Activated CD8-positive, alpha-beta T cell treated with anti-CD3 and anti-CD28 coated beads, Interleukin-2, amount 10 ng/mL, durations not matched to agents 7 days and 5 days (primary cell): ENCODE measurements at regions of chr17 and their contacts with region 1.

Region 1: DNA sequence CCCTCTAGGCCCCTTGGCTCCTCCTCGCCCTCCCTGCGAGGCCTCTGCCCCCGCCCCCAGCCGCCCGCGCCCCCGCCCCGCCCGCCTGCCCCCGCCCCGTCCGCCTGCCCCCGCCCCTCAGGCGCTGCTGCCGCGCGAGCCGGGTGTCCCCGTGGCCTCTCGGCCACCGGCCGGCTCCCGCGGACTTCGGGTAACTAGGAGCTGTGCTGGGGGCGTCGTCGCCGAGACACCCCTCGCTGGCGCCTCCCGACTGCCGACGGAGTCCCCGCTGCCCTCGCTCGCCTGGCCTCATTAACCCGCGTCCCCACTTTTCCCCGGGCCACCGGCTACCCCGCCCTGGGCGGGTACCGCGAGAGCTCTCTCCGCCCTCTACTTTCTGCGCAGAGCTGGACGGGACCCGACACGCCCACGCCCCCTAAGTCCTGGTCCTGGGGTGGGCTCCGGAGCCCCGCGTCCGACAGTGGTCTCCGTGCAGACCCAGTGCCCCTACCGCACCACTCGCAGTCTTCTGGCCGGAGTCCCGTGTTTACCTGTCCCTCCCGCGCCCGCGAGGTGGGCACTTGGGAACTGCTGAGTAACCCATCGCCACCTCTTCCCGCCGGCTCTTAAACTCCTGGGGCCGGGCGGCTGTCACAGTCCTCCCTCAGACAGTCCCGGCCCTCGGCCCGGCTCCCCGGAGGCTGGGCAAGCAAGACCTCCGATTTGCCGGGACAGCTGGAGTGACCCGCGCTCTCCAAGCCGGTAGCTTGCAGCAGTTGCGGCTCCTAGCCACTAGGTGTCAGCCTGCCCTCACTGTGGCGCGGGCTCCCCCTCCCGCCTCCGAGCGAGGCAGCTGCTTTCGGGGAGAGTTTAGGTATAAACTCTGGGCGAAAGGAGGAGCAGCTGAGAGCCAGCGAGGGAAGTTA is at the start of gene TLCD1:
- DNase-seq: peak; percentile 95
- ATAC-seq: peak; percentile 64
- H3K4me3 Mint-ChIP-seq: peak within 1 kb of the TSS; percentile 94
- H3K27ac Mint-ChIP-seq: peak within 1 kb of the TSS; percentile 99
- H3K4me1 Mint-ChIP-seq: peaks cover 64% of the 10 kb centered on the region
- H3K27me3 Mint-ChIP-seq: no peaks in the 10 kb centered on the region
- total RNA-seq, gene TLCD1: 2.8 to 3.0 TPM

Region 2: DNA sequence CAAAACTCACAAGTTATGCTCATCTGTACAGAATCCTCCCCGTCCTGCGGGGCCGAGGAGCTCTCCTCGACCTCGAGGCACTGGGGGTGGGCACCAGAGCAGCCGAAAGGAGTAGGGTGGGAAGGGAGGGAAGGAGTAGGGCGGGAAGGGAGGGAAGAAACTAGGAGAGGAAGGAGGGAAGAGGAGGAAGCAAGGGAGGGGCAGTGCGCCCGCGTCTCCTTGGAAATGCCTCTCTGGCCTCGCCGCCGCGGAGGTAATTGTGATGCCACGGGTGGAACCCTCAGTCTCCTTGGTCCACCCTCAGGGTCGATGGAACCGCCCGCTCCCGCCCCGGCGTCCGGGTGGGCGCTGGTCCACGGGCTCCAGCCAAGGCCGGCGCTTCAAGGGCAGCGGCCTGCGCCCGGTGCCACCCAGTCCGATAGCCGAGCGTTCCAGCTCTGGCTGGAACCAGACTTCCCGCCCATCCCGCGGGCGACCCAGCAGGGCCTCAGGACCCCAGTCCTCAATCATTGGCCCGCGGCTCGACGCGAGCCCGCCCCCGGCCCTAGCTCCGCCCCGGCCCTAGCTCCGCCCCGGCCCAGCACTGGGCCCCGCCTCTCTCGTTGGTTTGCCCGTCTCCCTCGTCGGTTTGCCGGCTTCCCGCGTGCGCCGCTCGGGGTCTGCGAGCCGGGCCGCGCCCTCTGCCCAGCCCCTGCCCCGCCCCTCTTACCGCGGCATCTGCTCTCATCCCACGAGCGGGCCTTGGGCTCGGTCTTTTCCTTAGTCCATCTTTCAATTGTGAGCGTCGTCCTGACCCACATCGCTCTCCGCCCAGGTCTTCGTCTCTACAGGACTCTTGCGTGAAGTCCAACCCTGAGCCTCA is 15.4 kb before region 1 on chr17:
- CTCF ChIA-PET with region 1: interaction called, 26 read pairs
- POLR2A ChIA-PET with region 1: interaction called, 8 read pairs
- DNase-seq: peak; percentile 91
- ATAC-seq: peak; percentile 91
- H3K4me3 Mint-ChIP-seq: peak overlapping the region; percentile 86
- H3K27ac Mint-ChIP-seq: peak overlapping the region; percentile 98
- H3K4me1 Mint-ChIP-seq: peaks cover 20% of the 10 kb centered on the region
- H3K27me3 Mint-ChIP-seq: peaks cover 9% of the 10 kb centered on the region

Region 3: DNA sequence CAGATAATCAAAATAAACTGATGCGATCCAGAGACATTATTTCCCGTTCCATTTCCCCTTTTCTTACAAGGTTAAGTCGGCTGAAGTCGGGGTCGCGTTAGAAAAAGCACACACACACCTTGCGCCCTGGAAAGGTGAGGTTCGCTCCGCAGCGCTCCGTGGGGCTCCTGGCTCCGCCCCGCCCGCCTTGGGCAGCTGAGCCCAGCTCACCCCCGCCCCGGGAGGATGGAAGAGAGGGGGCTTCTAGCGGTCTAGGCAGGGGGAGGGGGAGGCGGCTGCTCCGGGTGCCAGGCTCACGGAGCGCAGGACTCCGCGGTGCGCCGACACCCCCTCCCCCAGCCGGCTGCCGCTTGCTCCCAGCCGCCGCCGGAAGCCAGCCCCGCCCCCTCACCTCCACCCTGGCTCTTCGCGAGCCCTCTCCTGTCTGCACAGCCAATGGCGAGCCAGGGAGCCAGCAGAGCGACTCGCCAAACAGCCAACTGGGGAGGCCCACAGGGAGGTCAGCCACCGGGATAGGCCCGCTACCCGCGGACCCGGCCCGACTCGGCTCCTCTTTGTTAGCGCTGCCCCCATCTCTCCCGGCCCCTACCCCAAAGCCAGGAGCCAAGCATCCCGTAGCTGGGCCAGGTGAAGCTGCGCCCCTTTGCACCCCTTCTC is 85.7 kb after region 1 on chr17:
- CTCF ChIA-PET with region 1: interaction called, 22 read pairs
- POLR2A ChIA-PET with region 1: interaction called, 6 read pairs
- DNase-seq: peak; percentile 97
- ATAC-seq: peak; percentile 100
- H3K4me3 Mint-ChIP-seq: peak overlapping the region; percentile 82
- H3K27ac Mint-ChIP-seq: peak overlapping the region; percentile 91
- H3K4me1 Mint-ChIP-seq: peaks cover 34% of the 10 kb centered on the region
- H3K27me3 Mint-ChIP-seq: no peaks in the 10 kb centered on the region

Region 4: DNA sequence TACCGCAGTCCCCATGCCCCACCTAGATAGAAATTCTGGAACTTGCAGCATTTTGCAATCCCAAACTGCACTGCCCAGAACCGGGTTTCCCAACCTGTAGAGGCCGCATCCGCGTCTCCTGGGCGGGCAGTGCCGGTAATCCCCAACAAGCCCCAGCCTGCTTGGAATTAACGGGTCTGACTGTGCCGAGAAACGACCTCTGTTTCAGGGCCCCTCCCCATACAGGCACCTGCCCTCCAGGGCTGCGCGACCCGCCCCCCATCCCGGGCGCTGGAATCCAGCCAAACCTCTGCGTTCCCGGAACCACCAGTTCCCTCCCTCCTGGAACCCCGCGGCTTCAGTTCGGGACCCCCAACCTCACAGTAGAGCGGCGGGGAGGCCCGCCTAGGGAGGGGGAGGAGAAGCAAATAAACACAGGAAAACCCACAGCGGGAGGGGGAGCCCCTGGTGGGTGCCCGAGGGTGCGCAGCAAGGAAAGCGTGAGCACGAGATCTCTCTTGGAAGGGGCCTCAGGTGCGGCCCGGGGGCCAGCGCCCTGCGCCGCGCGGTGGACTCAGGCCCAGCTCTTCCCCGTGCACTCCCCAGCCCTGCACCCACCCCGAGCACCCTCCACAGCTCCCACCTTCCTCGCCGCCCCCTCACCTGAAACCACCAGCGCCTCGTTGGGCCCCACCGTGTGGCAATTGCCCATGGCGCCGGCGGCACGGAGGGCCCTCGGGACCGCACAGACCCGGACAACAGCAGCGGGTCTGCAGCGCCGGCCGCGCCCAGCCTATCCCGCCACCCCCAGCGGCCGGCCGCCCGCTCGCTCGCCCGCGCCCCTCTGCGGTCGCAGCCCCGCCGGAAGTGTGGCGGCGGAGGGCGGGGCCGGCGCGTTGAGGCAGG is 170.6 kb after region 1 on chr17 and contains the start of gene FLOT2:
- CTCF ChIA-PET with region 1: interaction called, 41 read pairs
- POLR2A ChIA-PET with region 1: interaction called, 14 read pairs
- DNase-seq: peak; percentile 73
- ATAC-seq: peak; percentile 74
- H3K4me3 Mint-ChIP-seq: peak within 1 kb of the TSS; percentile 98
- H3K27ac Mint-ChIP-seq: peak within 1 kb of the TSS; percentile 95
- H3K4me1 Mint-ChIP-seq: peaks cover 66% of the 10 kb centered on the region
- H3K27me3 Mint-ChIP-seq: no peaks in the 10 kb centered on the region
- total RNA-seq, gene FLOT2: 197 to 198 TPM

Region 5: DNA sequence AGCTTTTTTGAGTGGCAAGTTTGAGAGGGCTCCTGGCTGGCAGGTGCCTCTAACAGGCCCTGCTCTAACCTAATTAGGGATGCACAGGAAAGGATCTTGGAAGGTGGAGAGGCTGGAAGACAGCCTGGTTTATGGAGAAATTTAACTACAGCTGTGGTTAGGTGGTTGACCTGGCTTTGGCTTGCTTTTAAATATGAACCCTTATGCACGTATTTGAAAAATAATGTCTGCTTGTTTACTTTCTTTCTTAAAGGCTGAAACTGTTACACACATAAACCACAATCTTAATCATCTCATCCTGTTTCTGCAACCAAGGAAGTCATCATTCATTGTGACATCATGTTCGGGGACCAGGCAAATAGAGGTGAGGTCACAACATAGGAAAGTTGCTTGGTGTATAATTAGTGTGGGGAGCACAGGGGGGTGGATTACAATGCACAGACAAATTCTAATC is 199.5 kb after region 1 on chr17:
- CTCF ChIA-PET with region 1: interaction called, 22 read pairs
- POLR2A ChIA-PET with region 1: interaction called, 7 read pairs
- DNase-seq: peak; percentile 70
- ATAC-seq: peak; percentile 94
- H3K4me3 Mint-ChIP-seq: peak overlapping the region; percentile 26
- H3K27ac Mint-ChIP-seq: peak overlapping the region; percentile 88
- H3K4me1 Mint-ChIP-seq: peaks cover 55% of the 10 kb centered on the region
- H3K27me3 Mint-ChIP-seq: no peaks in the 10 kb centered on the region

Region 6: DNA sequence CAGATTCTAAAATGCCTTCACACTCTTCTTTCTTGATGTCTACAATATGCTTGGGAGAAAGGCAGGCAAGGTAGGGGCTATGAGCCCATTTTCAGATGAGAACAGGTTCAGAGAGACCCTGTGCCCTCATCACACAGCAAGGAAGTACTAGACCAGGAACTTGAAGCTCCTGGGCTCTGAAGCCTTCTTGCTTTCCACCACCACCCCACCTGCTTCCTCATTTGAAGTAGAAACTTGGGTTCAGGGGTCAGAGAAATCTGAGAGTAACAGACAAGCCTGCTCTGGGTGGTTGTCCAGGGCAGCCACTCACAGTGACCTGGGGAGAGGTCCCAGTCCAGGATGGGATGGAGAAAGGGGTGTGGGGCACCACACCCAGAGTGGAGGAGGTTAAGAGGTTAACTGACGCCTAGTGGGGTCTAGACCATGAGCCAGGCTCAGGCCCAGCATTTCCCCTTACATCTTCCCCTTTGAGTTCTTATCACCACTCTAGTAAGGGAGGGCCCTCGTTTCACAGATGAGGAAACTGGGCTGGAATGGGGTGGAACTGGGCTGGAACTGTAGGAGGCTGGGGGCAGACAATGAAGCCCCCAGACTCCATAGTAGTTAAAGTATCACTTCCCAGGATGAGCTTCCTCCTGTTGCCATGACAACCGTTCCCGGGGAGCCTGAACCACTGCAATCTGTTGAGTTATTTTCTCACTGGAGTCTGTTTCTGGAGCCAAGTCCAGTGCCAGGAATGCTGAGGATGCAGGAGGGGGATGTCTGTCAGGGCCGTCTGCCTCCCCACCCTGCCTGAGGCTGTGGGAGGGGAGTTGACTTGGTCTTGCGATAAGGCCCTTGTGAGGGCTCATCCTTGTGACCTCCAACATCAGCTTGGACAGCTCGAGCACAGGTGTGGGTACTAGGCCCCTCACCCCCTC is 241.0 kb after region 1 on chr17:
- CTCF ChIA-PET with region 1: interaction called, 16 read pairs
- POLR2A ChIA-PET with region 1: no interaction called
- DNase-seq: no peak
- ATAC-seq: no peak
- H3K4me3 Mint-ChIP-seq: no peak overlapping the region
- H3K27ac Mint-ChIP-seq: peak overlapping the region; percentile 51
- H3K4me1 Mint-ChIP-seq: peaks cover 4% of the 10 kb centered on the region
- H3K27me3 Mint-ChIP-seq: peaks cover 15% of the 10 kb centered on the region